Naive thymus-derived CD4-positive, alpha-beta T cell (primary cell): ENCODE measurements at regions of chr12 and their contacts with region 1.

Region 1: DNA sequence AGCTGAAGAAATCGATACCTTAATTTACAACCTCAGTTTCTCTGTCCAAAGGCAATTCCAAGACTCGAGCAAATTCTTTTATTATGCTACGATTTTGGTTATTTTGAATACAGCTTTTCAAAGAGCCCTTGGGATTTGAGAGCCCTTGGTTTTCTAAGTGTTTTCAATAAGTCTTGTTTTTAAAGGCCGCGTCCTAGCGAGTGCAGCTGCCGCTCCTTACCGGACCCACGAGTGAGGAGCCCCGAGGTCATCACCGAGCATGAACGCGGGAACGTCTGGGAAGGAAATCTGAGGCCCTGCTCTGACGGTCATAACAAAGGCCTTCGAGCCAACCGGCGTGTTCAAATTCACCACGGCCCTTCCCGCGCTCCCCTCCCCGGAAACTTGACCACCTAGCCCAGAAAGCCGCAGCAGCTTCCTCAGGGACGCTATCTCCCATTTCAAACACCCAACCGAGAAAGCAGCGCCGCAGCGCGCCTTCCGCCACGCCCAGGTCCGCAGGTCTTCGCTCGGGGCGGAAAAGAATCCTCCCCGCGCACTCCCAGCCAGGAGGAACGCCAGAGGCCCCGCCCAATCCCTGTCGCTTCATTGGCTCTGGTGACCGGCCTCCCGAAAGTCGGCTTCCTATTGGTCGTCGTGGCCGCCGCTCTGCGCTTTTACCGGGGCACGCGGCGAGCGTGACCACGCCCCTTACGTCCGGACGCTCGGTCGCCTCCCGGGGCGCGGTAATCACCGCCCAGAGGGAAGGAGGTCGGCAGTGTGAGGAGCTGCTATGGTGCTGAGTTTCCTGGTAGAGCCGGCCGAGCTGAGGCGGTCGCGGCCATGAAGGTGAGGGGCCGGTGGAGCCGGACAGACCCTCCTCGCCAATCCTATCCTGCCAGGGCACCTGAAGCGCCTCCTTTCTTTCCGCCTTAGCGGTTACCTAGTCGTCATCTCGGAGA is at the start of gene RNF34:
- DNase-seq: peak; percentile 88 to 98 (median 97)
- ATAC-seq: peak; percentile 96
- H3K4me3 ChIP-seq: peak within 1 kb of the TSS; percentile 93
- H3K4me3 Mint-ChIP-seq: peak within 1 kb of the TSS; percentile 89 to 99 (median 94)
- H3K27ac ChIP-seq: peak within 1 kb of the TSS; percentile 91
- H3K27ac Mint-ChIP-seq: peak within 1 kb of the TSS; percentile 91 to 97 (median 94)
- H3K4me1 ChIP-seq: peaks cover 20 to 26% of the 10 kb centered on the region in 2 donors
- H3K4me1 Mint-ChIP-seq: peaks cover 29 to 52% (median 39%) of the 10 kb centered on the region in 7 donors
- H3K27me3 ChIP-seq: no peaks in the 10 kb centered on the region
- H3K27me3 Mint-ChIP-seq: no peaks in the 10 kb centered on the region
- total RNA-seq, gene RNF34: 61.1 to 98.4 (median 81.7) TPM

Region 2: GRCh38 chr12:121060149-121061001 is 339.3 kb before region 1 on chr12:
- CTCF ChIA-PET with region 1: no interaction called
- POLR2A ChIA-PET with region 1: no interaction called
- intact Hi-C with region 1: loop called in 1 of 2 experiments (anchors 2 kb)
- DNase-seq: peak; percentile 28 to 78 (median 67)
- ATAC-seq: peak; percentile 97
- H3K4me3 ChIP-seq: peak overlapping the region; percentile 74
- H3K4me3 Mint-ChIP-seq: peak overlapping the region; percentile 73 to 91 (median 85)
- H3K27ac ChIP-seq: peak overlapping the region; percentile 56
- H3K27ac Mint-ChIP-seq: peak overlapping the region; percentile 75 to 98 (median 91)
- H3K4me1 ChIP-seq: peaks cover 7 to 11% of the 10 kb centered on the region in 2 donors
- H3K4me1 Mint-ChIP-seq: peaks cover 9 to 31% (median 17%) of the 10 kb centered on the region in 7 donors
- H3K27me3 ChIP-seq: no peaks in the 10 kb centered on the region
- H3K27me3 Mint-ChIP-seq: no peaks in the 10 kb centered on the region

Region 3: DNA sequence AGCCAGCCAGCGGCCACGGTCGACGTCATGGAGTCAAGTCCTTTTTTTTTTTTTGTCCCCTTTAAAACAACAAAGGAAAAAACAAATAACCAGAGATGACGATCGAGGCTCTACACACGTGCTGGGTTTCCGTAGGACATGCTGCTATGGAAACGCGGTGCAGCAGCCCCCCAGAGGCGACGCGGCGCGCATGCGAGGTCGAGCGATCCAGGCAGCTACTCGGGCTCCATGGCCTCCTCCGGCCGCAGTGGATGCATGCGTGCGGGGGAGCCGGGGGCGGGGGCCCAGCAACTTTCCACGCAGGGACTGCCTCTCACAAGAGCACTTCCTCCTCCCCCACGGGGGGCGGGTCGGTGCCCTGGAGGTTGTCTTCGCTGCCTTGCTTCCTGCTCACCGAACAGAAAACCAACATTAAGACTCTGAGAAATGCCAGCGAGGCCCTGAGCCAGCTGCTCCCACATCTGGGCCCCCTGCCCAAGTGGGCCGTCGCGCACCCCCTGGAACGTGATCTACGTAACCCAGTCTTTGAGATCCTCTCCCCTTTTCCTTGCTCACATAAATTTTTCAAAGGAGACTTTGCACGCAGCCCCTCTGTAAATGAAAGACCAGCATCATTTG is 159.1 kb before region 1 on chr12:
- CTCF ChIA-PET with region 1: no interaction called
- POLR2A ChIA-PET with region 1: interaction called, 7 read pairs
- intact Hi-C with region 1: loop called in 1 of 2 experiments (anchors 1 kb)
- DNase-seq: peak; percentile 78 to 99 (median 96)
- ATAC-seq: peak; percentile 95
- H3K4me3 ChIP-seq: peak overlapping the region; percentile 71
- H3K4me3 Mint-ChIP-seq: peak overlapping the region; percentile 81 to 94 (median 88)
- H3K27ac ChIP-seq: peak overlapping the region; percentile 87
- H3K27ac Mint-ChIP-seq: peak overlapping the region; percentile 90 to 100 (median 99)
- H3K4me1 ChIP-seq: peaks cover 30 to 44% of the 10 kb centered on the region in 2 donors
- H3K4me1 Mint-ChIP-seq: peaks cover 26 to 57% (median 47%) of the 10 kb centered on the region in 7 donors
- H3K27me3 ChIP-seq: no peaks in the 10 kb centered on the region
- H3K27me3 Mint-ChIP-seq: no peaks in the 10 kb centered on the region

Region 4: DNA sequence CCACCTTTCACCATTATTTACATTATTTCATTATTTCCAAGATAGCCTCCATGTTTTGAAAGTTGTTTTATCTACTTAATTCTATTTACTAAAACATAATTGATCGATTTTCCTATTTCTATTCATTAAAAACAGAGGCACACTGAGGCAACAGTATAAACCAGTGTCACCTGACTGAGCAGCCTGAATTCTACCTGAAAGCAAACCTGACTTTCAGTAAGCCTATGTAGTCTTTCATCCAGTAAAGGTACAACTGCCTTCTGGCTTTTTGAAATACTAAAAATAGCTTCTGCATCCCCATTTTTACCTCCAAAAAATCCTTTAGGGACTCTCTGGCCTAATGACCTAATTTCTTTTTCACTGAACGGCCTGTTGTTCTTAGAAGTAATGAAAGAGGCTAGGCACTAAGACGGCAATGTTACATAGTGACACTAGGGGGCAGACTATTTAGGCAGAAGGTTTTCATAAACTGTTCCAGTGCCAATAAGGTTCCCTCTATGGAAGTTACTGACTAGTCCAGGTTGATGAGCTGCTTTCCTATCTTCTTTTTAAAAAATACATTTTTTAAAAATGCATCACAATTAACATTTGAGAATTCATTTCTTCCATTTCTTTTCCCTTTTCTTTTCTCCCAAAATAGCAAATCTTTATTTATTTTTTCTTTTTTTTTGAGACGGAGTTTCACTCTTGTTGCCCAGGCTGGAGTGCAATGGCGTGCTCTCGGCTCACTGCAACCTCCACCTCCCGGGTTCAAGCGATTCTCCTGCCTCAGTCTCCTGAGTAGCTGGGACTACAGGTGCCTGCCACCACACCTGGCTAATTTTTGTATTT is 64.9 kb before region 1 on chr12:
- CTCF ChIA-PET with region 1: interaction called, 4 read pairs
- POLR2A ChIA-PET with region 1: interaction called, 10 read pairs
- intact Hi-C with region 1: loop called (anchors 1 to 2 kb)
- DNase-seq: peak in 8 of 9 donors; percentile 15 to 57 (median 46)
- ATAC-seq: peak; percentile 92
- H3K4me3 ChIP-seq: no peak overlapping the region
- H3K4me3 Mint-ChIP-seq: no peak overlapping the region
- H3K27ac ChIP-seq: no peak overlapping the region
- H3K27ac Mint-ChIP-seq: peak overlapping the region in 2 of 9 donors; percentile 14 to 76
- H3K4me1 ChIP-seq: peaks cover 0 to 3% of the 10 kb centered on the region in 2 donors
- H3K4me1 Mint-ChIP-seq: peaks cover 0 to 7% (median 5%) of the 10 kb centered on the region in 7 donors
- H3K27me3 ChIP-seq: no peaks in the 10 kb centered on the region
- H3K27me3 Mint-ChIP-seq: no peaks in the 10 kb centered on the region

Region 5: DNA sequence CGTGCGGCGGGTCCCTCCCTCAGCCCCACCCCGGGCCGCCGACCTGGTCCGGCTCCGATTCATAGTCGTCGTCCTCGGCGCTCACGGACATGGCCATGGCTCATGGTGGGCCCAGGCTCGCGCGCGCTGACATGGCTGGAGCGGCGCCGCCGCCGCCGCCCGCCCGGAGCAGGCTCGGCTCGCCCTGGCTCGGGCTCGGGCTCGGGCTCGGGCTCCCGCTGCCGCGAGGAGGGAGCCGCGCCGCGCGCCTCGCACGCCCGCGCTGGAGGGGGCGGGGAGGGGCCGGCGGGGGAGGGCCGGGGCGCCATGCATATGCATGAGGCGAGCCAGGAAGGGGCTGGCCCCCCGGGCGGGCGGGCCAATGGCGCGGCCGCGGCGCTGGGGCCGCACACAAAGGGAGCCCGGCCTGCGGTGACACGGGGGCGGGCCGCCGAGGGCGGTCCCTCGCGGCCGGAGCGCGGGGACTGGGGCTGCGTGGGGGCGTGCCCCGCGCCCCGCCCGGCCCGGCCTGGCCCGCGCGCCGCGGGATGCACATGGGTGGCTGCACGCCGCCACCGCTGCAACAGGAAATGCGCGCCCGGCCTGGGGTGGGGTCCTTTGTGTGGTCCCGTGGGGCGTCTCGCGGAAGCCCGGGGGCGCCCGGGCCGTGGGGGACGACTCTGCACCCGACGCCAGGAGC is 67.6 kb after region 1 on chr12:
- CTCF ChIA-PET with region 1: no interaction called
- POLR2A ChIA-PET with region 1: interaction called, 4 read pairs
- intact Hi-C with region 1: loop called (anchors 1 kb)
- DNase-seq: peak; percentile 79 to 93 (median 86)
- ATAC-seq: peak; percentile 92
- H3K4me3 ChIP-seq: peak overlapping the region; percentile 44
- H3K4me3 Mint-ChIP-seq: peak overlapping the region in 6 of 10 donors; percentile 45 to 90 (median 59)
- H3K27ac ChIP-seq: peak overlapping the region; percentile 73
- H3K27ac Mint-ChIP-seq: no peak overlapping the region
- H3K4me1 ChIP-seq: peaks cover 7 to 17% of the 10 kb centered on the region in 2 donors
- H3K4me1 Mint-ChIP-seq: peaks cover 18 to 34% (median 30%) of the 10 kb centered on the region in 7 donors
- H3K27me3 ChIP-seq: no peaks in the 10 kb centered on the region
- H3K27me3 Mint-ChIP-seq: peaks cover 0 to 3% (median 0%) of the 10 kb centered on the region in 5 donors

Region 6: GRCh38 chr12:121688966-121689365 is 289.3 kb after region 1 on chr12:
- CTCF ChIA-PET with region 1: no interaction called
- POLR2A ChIA-PET with region 1: no interaction called
- intact Hi-C with region 1: loop called in 1 of 2 experiments (anchors 2 kb)
- DNase-seq: no peak
- ATAC-seq: no peak
- H3K4me3 ChIP-seq: no peak overlapping the region
- H3K4me3 Mint-ChIP-seq: no peak overlapping the region
- H3K27ac ChIP-seq: no peak overlapping the region
- H3K27ac Mint-ChIP-seq: peak overlapping the region in 6 of 9 donors; percentile 8 to 36 (median 22)
- H3K4me1 ChIP-seq: peaks cover 0 to 4% of the 10 kb centered on the region in 2 donors
- H3K4me1 Mint-ChIP-seq: peaks cover 0 to 16% (median 10%) of the 10 kb centered on the region in 7 donors
- H3K27me3 ChIP-seq: no peaks in the 10 kb centered on the region
- H3K27me3 Mint-ChIP-seq: peaks cover 0 to 6% (median 0%) of the 10 kb centered on the region in 5 donors

Region 7: GRCh38 chr12:121903202-121903601 is 503.5 kb after region 1 on chr12:
- CTCF ChIA-PET with region 1: no interaction called
- POLR2A ChIA-PET with region 1: no interaction called
- intact Hi-C with region 1: no loop called
- DNase-seq: no peak
- ATAC-seq: no peak
- H3K4me3 ChIP-seq: no peak overlapping the region
- H3K4me3 Mint-ChIP-seq: no peak overlapping the region
- H3K27ac ChIP-seq: no peak overlapping the region
- H3K27ac Mint-ChIP-seq: no peak overlapping the region
- H3K4me1 ChIP-seq: no peaks in the 10 kb centered on the region
- H3K4me1 Mint-ChIP-seq: peaks cover 0 to 4% (median under 1%) of the 10 kb centered on the region in 7 donors
- H3K27me3 ChIP-seq: no peaks in the 10 kb centered on the region
- H3K27me3 Mint-ChIP-seq: no peaks in the 10 kb centered on the region